Caco-2 (cell line): ENCODE measurements at regions of chr22 and their contacts with region 1.

Region 1: GRCh38 chr22:37511395-37512104 is 7.7 kb downstream of the CARD10 start:
- DNase-seq: no peak
- H3K4me3 ChIP-seq: no peak overlapping the region
- H3K4me3 Mint-ChIP-seq: no peak overlapping the region
- H3K27ac Mint-ChIP-seq: peak overlapping the region; percentile 58
- H3K4me1 ChIP-seq: peaks cover 37% of the 10 kb centered on the region
- H3K4me1 Mint-ChIP-seq: peaks cover 24% of the 10 kb centered on the region
- H3K27me3 ChIP-seq: no peaks in the 10 kb centered on the region
- H3K27me3 Mint-ChIP-seq: no peaks in the 10 kb centered on the region
- CTCF ChIP-seq: no peak

Region 2: GRCh38 chr22:37472418-37473006 is 39.0 kb before region 1 on chr22:
- CTCF ChIA-PET with region 1: interaction called, 11 read pairs
- POLR2A ChIA-PET with region 1: no interaction called
- intact Hi-C with region 1: no loop called
- DNase-seq: peak; percentile 61 to 69
- H3K4me3 ChIP-seq: no peak overlapping the region
- H3K4me3 Mint-ChIP-seq: no peak overlapping the region
- H3K27ac Mint-ChIP-seq: no peak overlapping the region
- H3K4me1 ChIP-seq: no peaks in the 10 kb centered on the region
- H3K4me1 Mint-ChIP-seq: no peaks in the 10 kb centered on the region
- H3K27me3 ChIP-seq: no peaks in the 10 kb centered on the region
- H3K27me3 Mint-ChIP-seq: no peaks in the 10 kb centered on the region
- CTCF ChIP-seq: peak; percentile 61 to 66

Region 3: DNA sequence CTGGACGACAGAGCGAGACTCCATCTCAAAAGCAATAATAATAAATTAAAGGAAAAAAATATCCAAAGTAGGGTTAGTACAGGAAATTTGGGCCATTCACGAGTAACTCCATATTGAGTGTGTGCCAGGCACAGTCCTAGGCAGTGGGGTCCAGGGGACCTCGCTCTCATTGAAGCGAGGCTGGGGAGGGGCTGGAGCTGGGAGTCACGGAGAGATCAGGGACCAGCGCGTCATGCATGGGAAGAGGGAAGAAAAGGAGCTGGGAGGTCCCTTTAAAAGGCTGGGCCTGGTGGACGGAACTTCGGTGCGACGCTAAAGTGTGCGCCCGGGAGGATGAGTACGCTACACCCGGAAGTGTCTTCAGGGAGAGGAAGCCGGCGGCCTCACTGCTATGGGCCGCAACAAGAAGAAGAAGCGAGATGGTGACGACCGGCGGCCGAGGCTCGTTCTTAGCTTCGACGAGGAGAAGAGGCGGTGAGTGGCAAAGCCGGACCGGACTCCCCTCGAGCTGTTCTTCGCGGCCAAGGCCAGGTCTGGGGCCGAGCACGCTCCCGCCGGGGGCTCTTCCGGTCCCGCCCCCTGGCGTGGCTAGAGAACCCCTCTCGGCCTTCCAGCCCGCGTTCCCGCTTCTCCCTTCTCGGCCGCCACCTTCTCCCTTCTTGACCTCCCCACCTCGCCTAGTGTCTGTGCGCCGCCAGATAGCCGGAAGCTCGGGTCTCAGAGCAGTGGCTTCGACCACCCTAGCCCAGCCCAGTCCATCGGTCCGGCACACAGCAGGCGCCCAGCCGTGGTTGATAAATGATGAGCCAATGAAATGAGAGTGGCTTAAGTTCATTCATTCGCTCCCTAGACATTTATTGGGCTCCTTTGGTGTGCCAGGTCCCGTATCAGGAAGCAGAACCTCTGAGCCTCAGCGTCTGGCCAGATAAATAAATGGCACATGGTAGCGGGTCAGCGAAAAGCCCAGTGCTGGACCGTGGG is 174.7 kb after region 1 on chr22 and contains the start of gene NOL12:
- CTCF ChIA-PET with region 1: no interaction called
- POLR2A ChIA-PET with region 1: no interaction called
- intact Hi-C with region 1: no loop called
- DNase-seq: peak; percentile 85
- H3K4me3 ChIP-seq: peak within 1 kb of the TSS; percentile 97
- H3K4me3 Mint-ChIP-seq: peak within 1 kb of the TSS; percentile 99
- H3K27ac Mint-ChIP-seq: peak within 1 kb of the TSS; percentile 95
- H3K4me1 ChIP-seq: peaks cover 16% of the 10 kb centered on the region; the same call in 1 of the 2 replicates
- H3K4me1 Mint-ChIP-seq: no peaks in the 10 kb centered on the region
- H3K27me3 ChIP-seq: no peaks in the 10 kb centered on the region; the same call in 1 of the 2 replicates
- H3K27me3 Mint-ChIP-seq: no peaks in the 10 kb centered on the region
- CTCF ChIP-seq: no peak
- total RNA-seq, gene NOL12: 20.2 and 22.3 TPM in 2 replicates